ENCODE measurements at regions of chr11 and their contacts with region 1.

Region 1: GRCh38 chr11:65593518-65594298 is 1.9 kb downstream of the KCNK7 start:
- DNase-seq: no peak
- H3K4me3 ChIP-seq: no peak overlapping the region
- H3K27ac ChIP-seq: no peak overlapping the region
- H3K4me1 ChIP-seq: peaks cover 3 to 10% (median 8%) of the 10 kb centered on the region in 4 experiments
- H3K27me3 ChIP-seq: peaks cover 8 to 27% (median 22%) of the 10 kb centered on the region in 4 experiments
- CTCF ChIP-seq: peak in 2 of 3 experiments; percentile 73 to 90; a peak in 3 of 4 replicates
- EP300 ChIP-seq: no peak
- POLR2A ChIP-seq: no peak
- RAD21 ChIP-seq: peak; percentile 45 to 52; a peak in 3 of 4 replicates

Region 2: DNA sequence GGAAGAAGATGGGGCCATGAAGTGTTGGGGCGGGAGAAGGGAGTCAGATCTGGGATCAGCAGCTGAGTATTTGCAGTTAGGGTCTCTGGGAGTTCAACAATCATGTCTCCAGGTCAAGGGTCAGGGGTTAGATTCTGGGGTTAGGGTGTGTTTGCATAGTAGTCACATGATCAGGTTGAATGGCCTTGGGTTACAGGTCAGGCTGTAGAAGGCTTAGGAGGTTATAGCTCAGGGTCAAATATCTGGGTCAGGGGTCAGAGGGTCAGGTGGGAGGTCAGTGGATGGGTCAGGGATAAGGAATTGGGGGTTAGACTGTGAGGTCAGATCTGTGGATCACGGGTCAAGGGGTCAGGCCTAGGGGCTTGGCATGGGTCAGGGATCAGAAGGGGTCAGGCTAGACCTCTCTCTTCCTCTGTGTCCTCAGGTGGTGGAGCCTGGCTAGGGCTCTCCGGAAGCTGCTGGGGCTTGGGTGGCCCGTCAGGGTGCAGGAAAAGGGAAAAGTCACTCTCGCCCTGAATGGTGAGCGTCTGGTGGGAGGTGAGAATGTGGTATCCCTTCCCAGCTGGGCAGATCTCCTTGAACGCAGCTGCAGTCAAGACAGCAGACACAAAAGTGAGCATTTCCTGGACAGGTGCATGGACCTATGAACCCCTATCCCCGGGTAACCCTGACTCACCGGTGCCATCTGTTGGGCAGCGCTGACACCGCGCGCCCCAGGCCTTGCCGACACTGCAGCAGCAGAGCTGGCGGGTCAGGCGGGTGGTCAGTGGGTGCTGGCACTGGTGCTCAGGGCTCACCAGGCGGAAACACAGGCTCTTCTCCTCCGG is 41.9 kb before region 1 on chr11:
- CTCF ChIA-PET with region 1: interaction called, 22 read pairs
- POLR2A ChIA-PET with region 1: interaction called, 3 read pairs
- DNase-seq: peak in 1 of 2 experiments; percentile 92
- H3K4me3 ChIP-seq: no peak overlapping the region
- H3K27ac ChIP-seq: no peak overlapping the region
- H3K4me1 ChIP-seq: peaks cover 0 to 36% (median 27%) of the 10 kb centered on the region in 4 experiments; a peak in 6 of 7 replicates
- H3K27me3 ChIP-seq: peaks cover 2 to 39% (median 26%) of the 10 kb centered on the region in 4 experiments; a peak in 6 of 7 replicates
- CTCF ChIP-seq: peak in 2 of 3 experiments; percentile 74 to 84; a peak in 3 of 4 replicates
- EP300 ChIP-seq: no peak
- POLR2A ChIP-seq: no peak
- RAD21 ChIP-seq: peak; percentile 36 to 58

Region 3: DNA sequence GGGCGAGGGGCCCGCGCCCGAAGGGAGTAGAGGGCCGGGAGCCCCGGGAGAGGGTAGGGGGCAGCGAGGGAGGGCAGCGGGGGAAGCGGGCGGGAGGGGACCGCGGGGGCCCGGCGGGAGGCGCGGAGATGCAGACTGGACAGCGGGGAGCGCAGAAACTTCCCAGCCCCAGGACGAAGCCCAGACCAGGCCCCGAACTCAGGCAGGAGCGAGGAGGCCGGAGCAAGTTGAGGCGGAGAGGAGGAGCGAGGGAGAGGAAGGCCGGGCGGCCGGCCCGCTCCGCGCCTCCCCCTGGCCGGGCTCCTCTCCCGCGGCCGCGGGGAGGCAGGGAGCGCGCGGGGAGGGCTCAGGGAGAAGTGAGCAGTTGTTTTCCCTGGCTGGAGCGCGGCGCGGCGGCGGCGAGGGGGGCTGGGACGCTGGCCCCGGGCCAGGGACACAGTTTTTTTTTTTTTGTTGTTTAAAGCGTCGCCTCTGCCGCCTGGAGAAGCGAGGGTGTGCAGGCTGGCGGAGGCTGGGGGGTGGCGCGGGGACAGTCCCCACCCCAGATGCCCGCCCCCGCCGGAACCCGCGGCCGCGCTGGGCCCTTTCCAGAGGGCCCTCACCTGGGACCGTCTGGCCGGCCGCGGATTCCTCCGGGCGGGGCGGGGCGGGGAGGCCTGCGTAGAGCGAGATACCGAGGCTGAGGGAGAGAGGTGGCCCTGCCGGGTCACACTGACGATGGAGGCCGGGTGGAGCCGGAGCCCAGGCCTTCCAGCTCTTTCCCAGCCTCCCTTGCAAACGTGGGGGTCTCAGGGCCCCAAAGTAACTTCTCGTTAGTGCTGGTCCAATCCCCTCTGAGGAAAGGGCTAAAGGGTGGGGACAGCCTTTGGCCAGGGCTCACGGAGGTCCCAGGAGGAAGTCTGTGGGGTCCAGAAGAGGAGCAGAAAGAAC is 35.4 kb before region 1 on chr11 and contains the start of gene LTBP3:
- CTCF ChIA-PET with region 1: interaction called, 22 read pairs
- POLR2A ChIA-PET with region 1: interaction called, 4 read pairs
- DNase-seq: peak in 1 of 2 experiments; percentile 72
- H3K4me3 ChIP-seq: peak within 1 kb of the TSS; percentile 39 to 77 (median 48)
- H3K27ac ChIP-seq: no peak within 1 kb of the TSS
- H3K4me1 ChIP-seq: peaks cover 0 to 51% (median 39%) of the 10 kb centered on the region in 4 experiments; a peak in 6 of 7 replicates
- H3K27me3 ChIP-seq: peaks cover 0 to 32% (median 21%) of the 10 kb centered on the region in 4 experiments; a peak in 5 of 7 replicates
- CTCF ChIP-seq: no peak
- EP300 ChIP-seq: no peak
- POLR2A ChIP-seq: no peak
- RAD21 ChIP-seq: no peak
- total RNA-seq, gene LTBP3: 12.8 and 15.3 TPM in 2 replicates

Region 4: DNA sequence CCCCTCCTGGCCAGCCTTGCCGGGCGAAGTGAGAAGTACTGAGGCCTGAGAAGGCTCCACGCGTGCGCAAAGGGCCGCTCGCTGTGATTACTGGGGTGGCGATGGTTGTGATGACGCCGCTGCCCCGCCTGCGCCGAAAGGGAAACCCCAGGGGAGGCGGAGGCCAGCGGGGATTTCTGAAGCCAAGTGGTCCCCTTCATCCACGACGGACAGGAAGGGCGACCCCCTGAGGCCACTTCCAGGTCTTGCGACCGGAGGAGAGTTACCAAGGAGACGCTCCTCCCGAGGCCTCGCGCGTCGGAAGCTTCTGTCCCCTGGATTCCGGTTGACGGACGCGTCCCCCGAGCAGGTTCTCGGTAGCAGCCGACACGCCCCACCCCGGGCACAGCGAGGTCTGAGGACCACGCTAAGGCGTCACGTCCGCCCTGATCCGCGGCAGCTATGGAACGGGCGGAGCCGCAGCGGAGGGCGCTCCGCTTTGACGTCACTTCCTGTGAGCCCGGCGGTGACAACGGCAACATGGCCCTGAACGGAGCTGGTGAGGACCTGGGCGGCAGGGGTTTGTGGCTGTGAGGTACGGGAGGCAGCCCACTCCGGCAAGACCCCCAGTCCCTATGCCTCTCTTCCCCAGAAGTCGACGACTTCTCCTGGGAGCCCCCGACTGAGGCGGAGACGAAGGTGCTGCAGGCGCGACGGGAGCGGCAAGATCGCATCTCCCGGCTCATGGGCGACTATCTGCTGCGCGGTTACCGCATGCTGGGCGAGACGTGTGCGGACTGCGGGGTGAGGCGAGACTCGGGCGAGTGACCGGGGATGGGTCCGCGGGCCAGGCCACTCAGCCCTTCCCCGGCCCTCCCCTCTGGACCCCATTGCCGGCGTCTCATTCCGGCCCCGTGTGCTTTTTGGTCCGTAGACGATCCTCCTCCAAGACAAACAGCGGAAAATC is 23.5 kb before region 1 on chr11 and contains the start of gene ZNRD2:
- CTCF ChIA-PET with region 1: interaction called, 162 read pairs
- POLR2A ChIA-PET with region 1: interaction called, 25 read pairs
- DNase-seq: peak; percentile 95 to 96
- H3K4me3 ChIP-seq: peak within 1 kb of the TSS; percentile 67 to 97 (median 92)
- H3K27ac ChIP-seq: peak within 1 kb of the TSS; percentile 33; the same call in 1 of the 2 replicates
- H3K4me1 ChIP-seq: peaks cover 10 to 29% (median 18%) of the 10 kb centered on the region in 4 experiments
- H3K27me3 ChIP-seq: peaks cover 0 to 11% (median 6%) of the 10 kb centered on the region in 4 experiments; a peak in 6 of 7 replicates
- CTCF ChIP-seq: peak in 2 of 3 experiments; percentile 66 to 84; a peak in 3 of 4 replicates
- EP300 ChIP-seq: no peak
- POLR2A ChIP-seq: peak in 1 of 2 experiments; percentile 80; a peak in 2 of 3 replicates
- RAD21 ChIP-seq: peak; percentile 44 to 50; a peak in 3 of 4 replicates
- total RNA-seq, gene ZNRD2: 53.4 and 56.1 TPM in 2 replicates

Region 5: GRCh38 chr11:65575568-65576231 is 18.0 kb before region 1 on chr11 and contains the start of gene EHBP1L1:
- CTCF ChIA-PET with region 1: interaction called, 162 read pairs
- POLR2A ChIA-PET with region 1: interaction called, 25 read pairs
- DNase-seq: no peak
- H3K4me3 ChIP-seq: peak within 1 kb of the TSS; percentile 27 to 63 (median 40)
- H3K27ac ChIP-seq: no peak within 1 kb of the TSS
- H3K4me1 ChIP-seq: peaks cover 13 to 31% (median 20%) of the 10 kb centered on the region in 4 experiments; a peak in 6 of 7 replicates
- H3K27me3 ChIP-seq: peaks cover 8 to 39% (median 28%) of the 10 kb centered on the region in 4 experiments
- CTCF ChIP-seq: no peak
- EP300 ChIP-seq: no peak
- POLR2A ChIP-seq: no peak
- RAD21 ChIP-seq: no peak
- total RNA-seq, gene EHBP1L1: 6.6 and 7.9 TPM in 2 replicates

Region 6: GRCh38 chr11:65606876-65607613 is 13.3 kb after region 1 on chr11:
- CTCF ChIA-PET with region 1: interaction called, 227 read pairs
- POLR2A ChIA-PET with region 1: interaction called, 41 read pairs
- DNase-seq: peak; percentile 94
- H3K4me3 ChIP-seq: peak overlapping the region; percentile 27 to 57 (median 37)
- H3K27ac ChIP-seq: no peak overlapping the region
- H3K4me1 ChIP-seq: peaks cover 0 to 20% (median 7%) of the 10 kb centered on the region in 4 experiments; a peak in 6 of 7 replicates
- H3K27me3 ChIP-seq: no peaks in the 10 kb centered on the region; a peak in 1 of 7 replicates
- CTCF ChIP-seq: no peak
- EP300 ChIP-seq: no peak
- POLR2A ChIP-seq: peak in 1 of 2 experiments; percentile 35; a peak in 1 of 3 replicates
- RAD21 ChIP-seq: no peak

Region 7: GRCh38 chr11:65615229-65615941 is 21.7 kb after region 1 on chr11 and contains the start of gene PCNX3:
- CTCF ChIA-PET with region 1: interaction called, 227 read pairs
- POLR2A ChIA-PET with region 1: interaction called, 41 read pairs
- DNase-seq: peak; percentile 98 to 100
- H3K4me3 ChIP-seq: peak within 1 kb of the TSS; percentile 63 to 88 (median 86)
- H3K27ac ChIP-seq: peak within 1 kb of the TSS; percentile 43; the same call in 1 of the 2 replicates
- H3K4me1 ChIP-seq: peaks cover 0 to 21% (median 11%) of the 10 kb centered on the region in 4 experiments; a peak in 5 of 7 replicates
- H3K27me3 ChIP-seq: no peaks in the 10 kb centered on the region
- CTCF ChIP-seq: no peak
- EP300 ChIP-seq: peak in 1 of 2 experiments; percentile 46; a peak in 1 of 3 replicates
- POLR2A ChIP-seq: 0 out of 3 replicates have a peak, but pooled peaks of 1 of the 2 experiments have one; percentile 49
- RAD21 ChIP-seq: no peak
- total RNA-seq, gene PCNX3: 38.8 and 39.4 TPM in 2 replicates